HepG2 (cell line): ENCODE measurements at regions of chr2 and their contacts with region 1.

Region 1: DNA sequence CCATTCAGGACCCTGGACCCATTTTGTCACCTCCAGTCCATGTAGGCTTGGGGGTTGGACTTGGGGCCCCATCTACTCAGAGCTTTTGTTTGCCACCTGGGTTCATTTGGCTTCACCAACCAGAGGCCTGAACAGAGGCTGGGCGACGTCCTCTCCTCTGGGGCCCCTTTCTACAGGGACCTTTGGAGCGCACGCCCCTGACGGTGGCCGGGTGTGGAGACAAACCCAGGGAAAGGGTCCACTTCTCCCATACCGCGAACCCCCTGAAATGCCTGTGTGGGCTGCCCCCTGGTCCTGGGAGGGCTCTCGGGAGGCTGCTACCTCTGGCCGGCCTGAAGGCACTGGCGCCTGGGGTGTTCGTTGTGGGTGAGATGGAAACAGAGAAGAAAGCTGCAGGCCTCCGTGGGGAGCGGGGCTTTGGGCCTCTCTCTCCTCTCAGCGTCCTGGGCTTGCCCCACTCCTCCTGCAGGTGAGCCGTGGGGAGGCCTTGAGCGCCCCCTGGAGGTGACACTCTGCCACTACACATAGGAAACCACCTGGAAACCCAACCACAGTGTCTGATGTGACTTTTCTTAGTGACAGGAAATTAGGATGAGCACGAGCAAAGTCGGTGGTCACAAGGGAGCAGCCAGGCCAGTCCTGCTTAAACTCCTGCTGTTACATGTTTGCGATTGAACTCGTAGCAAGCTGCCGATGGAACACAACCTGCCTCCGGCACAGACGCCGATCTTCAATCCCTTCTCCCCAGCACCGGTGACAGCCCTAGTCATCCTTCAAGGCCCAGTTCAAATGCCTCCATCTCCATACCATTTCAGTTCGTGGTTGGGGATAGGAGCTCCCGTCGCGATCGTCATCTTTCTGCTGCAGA is 12.0 kb upstream of the NTSR2 start:
- DNase-seq: peak; percentile 55
- ATAC-seq: peak; percentile 75
- H3K4me3 ChIP-seq: peak overlapping the region; percentile 23 to 66 (median 43); a peak in 5 of 6 replicates
- H3K27ac ChIP-seq: peak overlapping the region; percentile 21
- H3K4me1 ChIP-seq: peaks cover 38% of the 10 kb centered on the region
- H3K27me3 ChIP-seq: peaks cover 3 to 60% of the 10 kb centered on the region in 2 experiments; a peak in 4 of 5 replicates
- CTCF ChIP-seq: peak; percentile 98
- EP300 ChIP-seq: 0 out of 4 replicates have a peak, but pooled peaks of 1 of the 2 experiments have one; percentile 7
- POLR2A ChIP-seq: no peak
- RAD21 ChIP-seq: peak; percentile 89

Region 2: DNA sequence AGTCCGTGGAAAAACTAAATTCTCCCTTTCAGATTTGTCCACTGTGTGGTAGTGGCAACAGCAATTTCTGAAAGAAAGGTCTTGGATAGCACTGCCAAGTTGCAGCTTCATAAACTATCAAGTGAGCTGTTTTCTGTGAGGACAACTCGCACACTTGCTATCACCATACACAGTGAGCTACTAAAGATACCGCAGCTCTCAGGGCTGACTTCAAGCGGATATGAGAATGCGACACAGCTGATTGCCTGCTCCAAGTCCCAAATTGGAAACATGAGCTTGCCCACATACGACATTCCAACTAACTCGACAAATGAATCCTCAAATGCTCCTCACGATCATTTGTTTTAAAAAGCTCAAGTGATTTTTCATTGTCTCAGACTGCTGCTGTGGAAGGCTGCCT is 262.2 kb before region 1 on chr2:
- CTCF ChIA-PET with region 1: no interaction called
- POLR2A ChIA-PET with region 1: no interaction called
- in situ Hi-C with region 1: no loop called
- intact Hi-C with region 1: loop called (anchors 5 kb)
- DNase-seq: no peak
- ATAC-seq: no peak
- H3K4me3 ChIP-seq: no peak overlapping the region
- H3K27ac ChIP-seq: no peak overlapping the region
- H3K4me1 ChIP-seq: peaks cover 38% of the 10 kb centered on the region
- H3K27me3 ChIP-seq: no peaks in the 10 kb centered on the region
- CTCF ChIP-seq: no peak
- EP300 ChIP-seq: no peak
- POLR2A ChIP-seq: no peak
- RAD21 ChIP-seq: no peak

Region 3: DNA sequence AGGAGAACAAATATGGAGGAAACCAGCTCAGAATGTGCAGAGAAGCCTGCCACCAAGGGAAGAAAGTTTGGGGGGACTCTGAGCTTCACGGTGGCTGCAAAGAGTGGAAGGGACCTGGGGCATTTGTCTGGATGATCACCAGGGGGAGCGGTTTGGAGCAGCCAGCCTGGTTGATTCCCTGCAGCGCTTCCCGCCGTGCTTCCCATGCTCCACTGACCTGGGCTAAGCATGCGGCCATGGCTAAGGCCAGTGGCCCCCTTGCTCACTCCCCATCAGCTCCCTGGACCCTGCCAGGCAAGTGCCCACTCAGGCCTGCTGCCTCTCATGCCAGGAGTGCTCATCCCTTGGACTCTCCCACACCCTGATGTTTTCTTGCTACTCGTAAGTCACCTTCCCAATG is 39.0 kb before region 1 on chr2:
- CTCF ChIA-PET with region 1: interaction called, 12 read pairs
- POLR2A ChIA-PET with region 1: no interaction called
- in situ Hi-C with region 1: no loop called
- intact Hi-C with region 1: loop called (anchors 1 kb)
- DNase-seq: no peak
- ATAC-seq: peak; percentile 43
- H3K4me3 ChIP-seq: no peak overlapping the region
- H3K27ac ChIP-seq: no peak overlapping the region
- H3K4me1 ChIP-seq: no peaks in the 10 kb centered on the region
- H3K27me3 ChIP-seq: no peaks in the 10 kb centered on the region
- CTCF ChIP-seq: peak; percentile 44
- EP300 ChIP-seq: no peak
- POLR2A ChIP-seq: no peak
- RAD21 ChIP-seq: no peak

Region 4: DNA sequence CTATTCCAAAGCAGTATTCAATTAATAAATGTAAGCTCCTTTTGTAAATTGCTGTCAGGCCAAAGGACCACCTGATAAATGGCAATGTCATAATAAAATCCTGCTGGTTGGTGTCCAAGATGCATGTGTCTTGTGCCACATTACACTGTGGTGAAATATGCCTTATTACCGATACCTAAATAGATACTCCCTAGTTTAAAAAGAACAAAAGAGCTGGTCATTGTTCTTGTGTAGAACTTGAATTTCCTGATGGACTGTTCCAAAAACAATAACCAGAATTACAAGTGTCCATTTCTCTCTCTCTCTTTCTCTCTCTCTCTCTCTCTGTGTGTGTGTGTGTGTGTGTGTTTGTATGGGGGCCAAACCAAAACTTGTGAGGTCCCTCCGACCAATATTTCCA is 50.6 kb after region 1 on chr2:
- CTCF ChIA-PET with region 1: no interaction called
- POLR2A ChIA-PET with region 1: no interaction called
- in situ Hi-C with region 1: no loop called
- intact Hi-C with region 1: no loop called
- DNase-seq: no peak
- ATAC-seq: no peak
- H3K4me3 ChIP-seq: no peak overlapping the region
- H3K27ac ChIP-seq: no peak overlapping the region
- H3K4me1 ChIP-seq: peaks cover 8% of the 10 kb centered on the region
- H3K27me3 ChIP-seq: no peaks in the 10 kb centered on the region; a peak in 1 of 5 replicates
- CTCF ChIP-seq: no peak
- EP300 ChIP-seq: no peak
- POLR2A ChIP-seq: no peak
- RAD21 ChIP-seq: no peak